Naive thymus-derived CD4-positive, alpha-beta T cell (primary cell): ENCODE measurements at regions of chr2 and their contacts with region 1.

Region 1: DNA sequence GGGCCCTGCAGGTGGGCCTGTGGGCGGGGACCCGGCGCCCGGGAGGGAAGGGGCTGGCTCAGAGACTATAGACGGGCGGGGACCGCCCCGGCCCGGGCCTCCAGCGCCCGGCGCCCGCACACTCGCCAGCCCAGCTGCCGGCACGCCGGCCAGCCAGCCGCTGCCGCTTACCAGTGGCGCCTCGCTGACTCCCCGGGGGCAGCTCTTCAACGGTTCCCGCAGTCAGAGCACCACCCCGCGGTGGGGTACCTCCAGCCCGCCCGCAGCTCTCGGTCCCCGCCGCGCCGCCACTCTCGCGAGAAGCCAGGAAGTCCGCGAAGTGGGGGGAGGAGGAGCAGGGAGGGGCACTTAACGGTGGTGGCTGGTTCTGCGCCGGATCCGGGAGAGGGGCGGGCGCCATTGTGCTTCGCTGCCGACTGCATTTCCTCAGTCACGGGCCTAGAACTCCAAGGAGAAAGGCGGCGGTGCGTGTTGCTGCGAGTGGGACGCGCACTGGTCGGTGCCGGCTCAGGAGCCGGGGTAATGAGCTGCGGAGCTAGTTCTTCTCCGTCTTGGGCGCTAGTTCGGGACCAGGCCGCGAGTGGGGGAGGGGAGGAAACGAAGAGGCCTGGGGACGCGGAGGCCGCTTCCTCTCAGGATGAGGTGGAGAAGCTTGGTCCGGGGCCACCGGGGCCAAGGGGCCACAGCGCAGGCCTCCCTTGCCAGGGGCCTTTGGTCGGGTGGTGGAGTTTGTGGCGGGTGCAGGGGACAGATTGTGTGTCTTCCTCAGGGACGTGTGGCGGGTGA is at the start of gene MARCHF7:
- DNase-seq: peak; percentile 95 to 99 (median 98)
- ATAC-seq: peak; percentile 96
- H3K4me3 ChIP-seq: peak within 1 kb of the TSS; percentile 98
- H3K4me3 Mint-ChIP-seq: peak within 1 kb of the TSS; percentile 95 to 100 (median 100)
- H3K27ac ChIP-seq: peak within 1 kb of the TSS; percentile 90
- H3K27ac Mint-ChIP-seq: peak within 1 kb of the TSS; percentile 97 to 100 (median 99)
- H3K4me1 ChIP-seq: peaks cover 43 to 44% of the 10 kb centered on the region in 2 donors
- H3K4me1 Mint-ChIP-seq: peaks cover 36 to 63% (median 50%) of the 10 kb centered on the region in 7 donors
- H3K27me3 ChIP-seq: no peaks in the 10 kb centered on the region
- H3K27me3 Mint-ChIP-seq: no peaks in the 10 kb centered on the region
- total RNA-seq, gene MARCHF7: 64.3 to 120 (median 80.2) TPM

Region 2: DNA sequence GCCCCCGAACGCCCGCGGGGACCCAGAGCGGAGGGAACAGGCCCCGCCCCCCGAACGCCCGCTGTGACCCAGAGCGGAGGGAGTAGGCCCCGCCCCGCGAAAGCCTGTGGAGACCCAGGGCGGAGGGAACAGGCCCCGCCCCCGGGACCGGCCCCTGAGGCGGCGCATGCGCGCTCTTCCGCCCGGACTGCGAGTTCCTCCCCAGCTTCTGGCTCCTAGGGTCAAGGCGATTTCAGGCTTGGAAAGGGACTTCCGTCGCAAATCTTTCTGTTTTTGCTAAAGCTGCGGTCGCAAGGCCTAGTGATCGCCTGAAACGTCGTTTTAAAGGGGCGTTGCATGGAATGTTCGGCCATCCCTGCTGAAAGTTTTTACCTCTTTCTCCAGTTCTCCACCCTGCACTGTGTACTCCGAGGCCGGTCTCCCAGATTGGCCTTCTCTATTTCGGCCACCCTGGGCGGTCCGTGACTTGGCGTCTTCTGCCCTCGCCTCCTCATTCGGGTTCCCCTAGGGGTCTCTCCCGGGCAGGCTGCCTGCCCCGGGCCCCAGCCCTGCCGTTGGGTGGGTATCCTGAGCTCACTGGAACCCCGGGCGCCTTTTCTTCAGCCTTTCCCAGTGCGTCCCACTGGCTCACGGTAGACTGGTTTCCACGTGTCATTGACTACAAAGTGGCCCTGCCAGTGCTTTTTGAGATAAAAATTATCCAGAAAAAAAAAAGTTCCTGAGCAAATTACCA is 425.5 kb before region 1 on chr2:
- CTCF ChIA-PET with region 1: interaction called, 3 read pairs
- POLR2A ChIA-PET with region 1: interaction called, 21 read pairs
- intact Hi-C with region 1: loop called (anchors 1 kb)
- DNase-seq: peak; percentile 89 to 97 (median 94)
- ATAC-seq: peak; percentile 99
- H3K4me3 ChIP-seq: peak overlapping the region; percentile 72
- H3K4me3 Mint-ChIP-seq: peak overlapping the region; percentile 80 to 92 (median 89)
- H3K27ac ChIP-seq: peak overlapping the region; percentile 77
- H3K27ac Mint-ChIP-seq: peak overlapping the region; percentile 64 to 97 (median 85)
- H3K4me1 ChIP-seq: peaks cover 8 to 13% of the 10 kb centered on the region in 2 donors
- H3K4me1 Mint-ChIP-seq: peaks cover 15 to 36% (median 31%) of the 10 kb centered on the region in 7 donors
- H3K27me3 ChIP-seq: no peaks in the 10 kb centered on the region
- H3K27me3 Mint-ChIP-seq: no peaks in the 10 kb centered on the region

Region 3: GRCh38 chr2:159615140-159615951 is 97.0 kb before region 1 on chr2:
- CTCF ChIA-PET with region 1: no interaction called
- POLR2A ChIA-PET with region 1: no interaction called
- intact Hi-C with region 1: loop called (anchors 2 kb)
- DNase-seq: peak in 8 of 9 donors; percentile 7 to 51 (median 22)
- ATAC-seq: peak; percentile 78
- H3K4me3 ChIP-seq: peak overlapping the region; percentile 58
- H3K4me3 Mint-ChIP-seq: peak overlapping the region; percentile 81 to 99 (median 89)
- H3K27ac ChIP-seq: peak overlapping the region; percentile 30
- H3K27ac Mint-ChIP-seq: peak overlapping the region in 2 of 9 donors; percentile 32 to 57
- H3K4me1 ChIP-seq: peaks cover 4 to 5% of the 10 kb centered on the region in 2 donors
- H3K4me1 Mint-ChIP-seq: peaks cover 10 to 18% (median 15%) of the 10 kb centered on the region in 7 donors
- H3K27me3 ChIP-seq: peaks cover 3% of the 10 kb centered on the region in 2 donors
- H3K27me3 Mint-ChIP-seq: peaks cover 17 to 50% (median 41%) of the 10 kb centered on the region in 5 donors

Region 4: DNA sequence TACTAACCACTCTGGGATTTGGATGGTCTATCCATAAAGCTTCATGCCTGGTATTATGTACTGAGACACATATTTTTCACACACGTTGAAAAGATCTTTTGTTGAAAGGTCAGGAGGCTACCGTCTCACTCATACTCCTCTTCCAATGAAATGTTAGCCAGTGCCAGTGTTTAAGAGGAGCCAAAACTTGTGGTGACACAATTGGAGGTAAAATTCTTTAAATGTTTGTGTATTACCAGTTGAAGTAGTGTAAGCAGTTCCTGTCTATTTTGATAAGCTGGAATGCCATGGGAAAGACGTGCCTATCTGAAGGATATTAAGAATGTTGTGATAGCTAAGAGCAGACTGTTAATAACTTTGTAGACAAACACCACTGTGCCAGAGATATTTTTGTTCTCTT is 32.0 kb after region 1 on chr2:
- CTCF ChIA-PET with region 1: no interaction called
- POLR2A ChIA-PET with region 1: interaction called, 3 read pairs
- intact Hi-C with region 1: loop called in 1 of 2 experiments (anchors 1 kb)
- DNase-seq: no peak
- ATAC-seq: no peak
- H3K4me3 ChIP-seq: no peak overlapping the region
- H3K4me3 Mint-ChIP-seq: no peak overlapping the region
- H3K27ac ChIP-seq: no peak overlapping the region
- H3K27ac Mint-ChIP-seq: peak overlapping the region in 2 of 9 donors; percentile 7 to 36
- H3K4me1 ChIP-seq: no peaks in the 10 kb centered on the region
- H3K4me1 Mint-ChIP-seq: peaks cover 12 to 47% (median 30%) of the 10 kb centered on the region in 7 donors
- H3K27me3 ChIP-seq: no peaks in the 10 kb centered on the region
- H3K27me3 Mint-ChIP-seq: no peaks in the 10 kb centered on the region

Region 5: GRCh38 chr2:159904127-159904958 is 192.0 kb after region 1 on chr2:
- CTCF ChIA-PET with region 1: no interaction called
- POLR2A ChIA-PET with region 1: interaction called, 7 read pairs
- intact Hi-C with region 1: loop called (anchors 1 kb)
- DNase-seq: peak; percentile 70 to 85 (median 83)
- ATAC-seq: peak; percentile 91
- H3K4me3 ChIP-seq: peak within 1 kb of the TSS; percentile 95
- H3K4me3 Mint-ChIP-seq: peak within 1 kb of the TSS; percentile 93 to 100 (median 98)
- H3K27ac ChIP-seq: peak within 1 kb of the TSS; percentile 87
- H3K27ac Mint-ChIP-seq: peak within 1 kb of the TSS; percentile 96 to 100 (median 98)
- H3K4me1 ChIP-seq: peaks cover 3 to 8% of the 10 kb centered on the region in 2 donors
- H3K4me1 Mint-ChIP-seq: peaks cover 24 to 52% (median 41%) of the 10 kb centered on the region in 7 donors
- H3K27me3 ChIP-seq: no peaks in the 10 kb centered on the region
- H3K27me3 Mint-ChIP-seq: peaks cover 0 to 3% (median 0%) of the 10 kb centered on the region in 5 donors

Region 6: DNA sequence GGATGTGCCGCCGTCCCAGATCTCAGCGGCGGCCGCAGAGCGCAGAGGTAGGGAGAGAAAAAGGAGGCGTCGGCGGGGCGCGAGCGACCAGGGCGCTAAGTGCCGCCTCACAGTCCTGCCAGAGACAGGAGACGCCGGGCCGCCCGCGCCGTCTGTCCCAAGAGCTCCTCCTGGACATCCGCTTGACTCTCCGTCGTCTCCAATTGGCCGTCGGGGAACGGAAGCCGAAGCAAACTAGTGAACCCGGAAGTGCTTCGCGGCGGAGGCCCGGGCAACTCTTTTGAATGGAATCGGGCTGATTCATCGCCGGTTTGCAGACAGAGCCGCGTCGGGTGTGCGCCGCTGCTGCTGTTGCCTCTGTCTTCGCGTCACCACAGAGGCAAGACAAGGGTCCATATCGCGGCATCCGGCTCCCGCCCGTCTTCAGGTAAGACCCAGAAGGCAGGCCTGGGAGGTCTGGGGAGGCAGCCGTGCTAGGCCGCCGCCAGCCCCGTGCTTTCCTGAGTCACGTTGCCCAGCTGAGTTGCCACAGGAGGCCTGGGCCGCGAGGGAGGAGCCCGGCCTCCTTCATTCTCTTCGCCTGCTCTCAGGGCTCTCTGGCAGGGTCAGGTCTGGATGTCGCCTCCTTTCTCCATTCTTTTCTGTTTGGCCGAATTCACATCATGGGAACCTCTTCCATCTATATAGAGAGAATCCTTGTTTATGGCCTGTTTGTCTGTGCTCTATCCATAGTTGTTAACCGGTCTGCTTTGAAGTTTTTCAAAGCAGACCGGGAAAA is 1596.0 kb after region 1 on chr2 and contains the start of gene PSMD14:
- CTCF ChIA-PET with region 1: no interaction called
- POLR2A ChIA-PET with region 1: no interaction called
- intact Hi-C with region 1: loop called (anchors 2 to 5 kb)
- DNase-seq: peak; percentile 67 to 88 (median 85)
- ATAC-seq: peak; percentile 95
- H3K4me3 ChIP-seq: peak within 1 kb of the TSS; percentile 94
- H3K4me3 Mint-ChIP-seq: peak within 1 kb of the TSS; percentile 89 to 98 (median 95)
- H3K27ac ChIP-seq: peak within 1 kb of the TSS; percentile 77
- H3K27ac Mint-ChIP-seq: peak within 1 kb of the TSS; percentile 92 to 97 (median 95)
- H3K4me1 ChIP-seq: peaks cover 3 to 19% of the 10 kb centered on the region in 2 donors
- H3K4me1 Mint-ChIP-seq: peaks cover 24 to 65% (median 42%) of the 10 kb centered on the region in 7 donors
- H3K27me3 ChIP-seq: no peaks in the 10 kb centered on the region
- H3K27me3 Mint-ChIP-seq: peaks cover 0 to 9% (median 3%) of the 10 kb centered on the region in 5 donors
- total RNA-seq, gene PSMD14: 13.2 to 69.5 (median 23.2) TPM